Activated CD4-positive, alpha-beta memory T cell treated with anti-CD3 and anti-CD28 coated beads for 36 hours (primary cell): ENCODE measurements at regions of chr17 and their contacts with region 1.

Region 1: GRCh38 chr17:32564325-32564724 is 77.5 kb downstream of the CDK5R1 start:
- DNase-seq: peak; percentile 59
- H3K4me3 Mint-ChIP-seq: no peak overlapping the region
- H3K27ac Mint-ChIP-seq: no peak overlapping the region
- H3K4me1 Mint-ChIP-seq: peaks cover 23% of the 10 kb centered on the region
- H3K27me3 Mint-ChIP-seq: no peaks in the 10 kb centered on the region

Region 2: GRCh38 chr17:32551186-32551955 is 13.0 kb before region 1 on chr17:
- CTCF ChIA-PET with region 1: interaction called, 3 read pairs
- POLR2A ChIA-PET with region 1: interaction called, 3 read pairs
- intact Hi-C with region 1: loop called (anchors 2 kb)
- DNase-seq: no peak
- H3K4me3 Mint-ChIP-seq: peak overlapping the region; percentile 20
- H3K27ac Mint-ChIP-seq: peak overlapping the region; percentile 59
- H3K4me1 Mint-ChIP-seq: peaks cover 39% of the 10 kb centered on the region
- H3K27me3 Mint-ChIP-seq: no peaks in the 10 kb centered on the region

Region 3: GRCh38 chr17:32584792-32585191 is 20.5 kb after region 1 on chr17:
- CTCF ChIA-PET with region 1: no interaction called
- POLR2A ChIA-PET with region 1: no interaction called
- intact Hi-C with region 1: no loop called
- DNase-seq: no peak
- H3K4me3 Mint-ChIP-seq: no peak overlapping the region
- H3K27ac Mint-ChIP-seq: no peak overlapping the region
- H3K4me1 Mint-ChIP-seq: no peaks in the 10 kb centered on the region
- H3K27me3 Mint-ChIP-seq: no peaks in the 10 kb centered on the region